ENCODE measurements at regions of chr1 and their contacts with region 1.

Region 1: DNA sequence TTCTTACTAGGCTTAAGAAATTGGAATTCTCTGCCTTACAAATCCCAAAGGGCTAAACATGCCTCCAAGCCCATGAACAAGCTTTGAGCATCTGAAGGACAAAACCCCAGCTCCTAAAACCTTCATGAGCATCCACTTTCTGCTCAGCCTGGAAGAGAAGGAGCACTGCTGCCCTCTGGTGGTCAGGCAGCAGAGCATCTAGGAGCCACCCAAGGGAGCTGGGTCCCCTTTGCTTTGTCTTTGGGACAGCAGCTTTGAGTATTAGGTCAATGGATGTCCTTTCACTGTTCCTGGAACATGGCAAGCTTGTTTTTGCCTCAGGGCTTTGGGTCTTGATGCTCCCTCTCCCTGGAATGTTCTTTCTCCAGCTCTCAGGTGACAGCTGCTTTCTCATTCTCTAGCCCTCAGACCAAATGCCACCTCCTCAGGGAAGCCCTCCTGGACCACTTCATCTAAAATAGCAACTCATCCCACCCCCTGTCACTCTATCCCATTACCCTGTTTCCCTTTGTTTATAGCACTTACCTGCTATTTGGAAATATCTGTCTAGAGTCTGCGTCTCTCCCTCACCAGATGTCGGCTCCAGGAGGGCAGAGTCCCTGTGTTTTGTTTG is 25.7 kb downstream of the RAB7B start:
- DNase-seq: peak; percentile 64
- H3K4me3 ChIP-seq: no peak overlapping the region
- H3K27ac ChIP-seq: no peak overlapping the region
- H3K4me1 ChIP-seq: no peaks in the 10 kb centered on the region
- H3K27me3 ChIP-seq: no peaks in the 10 kb centered on the region
- CTCF ChIP-seq: peak; percentile 98

Region 2: DNA sequence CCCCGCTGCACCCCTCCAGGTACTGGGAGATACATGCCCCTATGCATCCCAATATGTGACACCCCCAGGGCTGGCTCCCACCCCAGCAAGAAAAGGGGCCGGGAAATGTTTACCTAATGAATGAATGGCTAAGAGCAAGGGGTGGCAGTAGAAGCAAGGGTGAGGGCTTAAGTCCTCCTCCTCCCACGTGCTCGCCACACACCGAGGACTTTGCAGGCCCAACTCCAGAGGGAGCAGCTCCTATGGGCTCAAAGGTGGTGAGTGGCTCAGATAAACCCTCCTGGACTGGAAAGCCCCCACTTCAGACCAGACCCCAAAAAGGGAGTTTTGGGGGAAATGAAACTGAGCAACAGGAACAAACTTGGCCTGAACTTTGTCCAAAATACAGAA is 308.6 kb before region 1 on chr1:
- intact Hi-C with region 1: loop called (anchors 10 kb)
- DNase-seq: peak; percentile 38
- H3K4me3 ChIP-seq: no peak overlapping the region
- H3K27ac ChIP-seq: peak overlapping the region; percentile 18
- H3K4me1 ChIP-seq: peaks cover 45% of the 10 kb centered on the region
- H3K27me3 ChIP-seq: no peaks in the 10 kb centered on the region
- CTCF ChIP-seq: no peak

Region 3: GRCh38 chr1:205791568-205792180 is 185.8 kb before region 1 on chr1:
- intact Hi-C with region 1: loop called (anchors 2 kb)
- DNase-seq: peak; percentile 71
- H3K4me3 ChIP-seq: no peak overlapping the region
- H3K27ac ChIP-seq: no peak overlapping the region
- H3K4me1 ChIP-seq: no peaks in the 10 kb centered on the region
- H3K27me3 ChIP-seq: no peaks in the 10 kb centered on the region
- CTCF ChIP-seq: peak; percentile 60

Region 4: DNA sequence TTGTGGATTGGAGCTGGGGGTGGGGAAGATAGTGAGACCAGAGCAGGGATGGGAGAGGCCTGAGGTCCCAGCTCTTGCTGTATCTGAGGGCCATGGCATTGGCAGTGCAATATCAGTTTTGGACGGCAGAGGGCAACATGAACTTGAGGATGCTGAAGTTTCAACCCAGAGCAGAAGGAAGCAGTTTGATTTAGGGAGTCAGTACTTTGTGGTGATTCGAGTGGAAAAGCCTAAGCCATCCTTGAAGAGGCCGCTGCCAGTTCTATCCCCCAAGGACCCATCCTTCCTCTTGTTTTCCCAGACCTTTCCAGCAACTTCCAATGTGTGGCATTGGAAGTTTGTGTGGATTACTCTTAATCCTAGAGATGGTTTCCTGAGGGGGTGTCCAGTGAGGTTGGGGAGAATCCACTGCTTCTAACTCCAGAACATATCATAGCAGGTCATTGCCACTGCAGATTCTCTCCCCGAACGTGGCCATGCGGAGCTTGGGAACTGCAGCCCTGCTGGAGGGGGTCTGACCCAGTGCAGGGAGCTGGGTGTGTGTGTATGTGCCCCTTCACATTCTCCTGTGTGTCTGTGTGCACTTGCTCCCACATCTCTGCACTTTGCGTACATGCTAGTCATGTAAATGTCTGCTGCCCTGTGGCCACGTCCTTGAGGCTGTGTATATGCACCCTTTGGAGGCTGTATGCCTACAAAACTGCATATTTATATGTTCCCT is 58.3 kb before region 1 on chr1:
- intact Hi-C with region 1: loop called (anchors 2 kb)
- DNase-seq: peak; percentile 75
- H3K4me3 ChIP-seq: no peak overlapping the region
- H3K27ac ChIP-seq: no peak overlapping the region
- H3K4me1 ChIP-seq: no peaks in the 10 kb centered on the region
- H3K27me3 ChIP-seq: no peaks in the 10 kb centered on the region
- CTCF ChIP-seq: peak; percentile 89

Measured in colonic mucosa (tissue), 4 donors.